OCI-LY7 (cell line): ENCODE measurements at regions of chr9 and their contacts with region 1.

Region 1: DNA sequence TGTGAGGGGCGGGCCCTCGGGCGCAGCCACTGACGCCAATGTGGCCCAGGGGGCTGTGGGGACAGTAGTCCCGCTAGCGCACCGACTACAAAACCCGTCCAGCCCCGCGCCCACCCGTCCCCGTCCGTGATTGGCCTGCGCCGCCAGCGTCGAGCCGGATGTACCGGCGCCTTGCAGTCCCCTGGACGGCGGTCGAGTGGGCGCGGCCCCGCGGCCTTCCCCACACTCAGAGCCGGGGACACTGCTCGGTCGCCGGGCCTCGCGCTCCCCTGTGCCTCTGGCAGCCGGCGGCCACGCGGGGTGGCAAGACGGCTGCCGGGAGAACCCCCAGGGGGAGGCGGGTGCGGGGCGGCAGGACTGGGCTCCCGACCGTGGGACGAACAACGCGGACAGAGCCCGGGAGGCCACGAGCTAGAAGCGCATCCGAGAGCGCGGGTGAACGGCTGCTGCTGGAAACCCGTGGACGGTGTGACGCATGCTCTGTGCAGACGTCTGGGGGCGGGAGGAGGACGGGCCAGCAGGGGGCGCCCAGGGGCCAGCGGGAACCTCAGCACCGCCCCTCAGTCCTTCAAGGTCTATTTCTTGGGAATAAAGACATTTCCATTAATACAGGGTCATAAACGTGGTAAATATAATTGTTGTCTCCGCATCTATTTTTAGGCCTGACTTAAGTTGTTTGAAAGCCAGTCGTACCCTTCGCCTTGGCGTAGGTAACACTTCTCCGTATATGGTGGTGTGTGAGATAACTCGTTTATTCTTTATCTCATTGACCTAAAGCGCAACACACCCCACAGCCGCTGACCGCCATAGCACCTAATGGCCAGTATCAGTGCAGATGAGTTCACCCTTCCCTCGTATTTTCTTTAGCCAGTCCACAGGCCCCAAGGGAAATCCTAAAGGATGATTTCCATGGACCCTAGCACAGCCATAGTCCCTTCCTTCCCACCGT is 629 bp upstream of the BICD2 start:
- DNase-seq: peak; percentile 82
- H3K4me3 ChIP-seq: peak overlapping the region; percentile 87
- H3K27ac ChIP-seq: peak overlapping the region; percentile 86
- H3K4me1 ChIP-seq: peaks cover 48% of the 10 kb centered on the region
- CTCF ChIP-seq: peak; percentile 97

Region 2: GRCh38 chr9:92245005-92245797 is 520.1 kb before region 1 on chr9:
- CTCF ChIA-PET with region 1: no interaction called
- POLR2A ChIA-PET with region 1: no interaction called
- intact Hi-C with region 1: no loop called
- DNase-seq: no peak
- H3K4me3 ChIP-seq: no peak overlapping the region
- H3K27ac ChIP-seq: no peak overlapping the region
- H3K4me1 ChIP-seq: no peaks in the 10 kb centered on the region
- CTCF ChIP-seq: no peak

Region 3: GRCh38 chr9:92669890-92670708 is 95.2 kb before region 1 on chr9 and contains the start of gene IPPK:
- CTCF ChIA-PET with region 1: no interaction called
- POLR2A ChIA-PET with region 1: no interaction called
- intact Hi-C with region 1: loop called (anchors 1 kb)
- DNase-seq: peak; percentile 100
- H3K4me3 ChIP-seq: peak within 1 kb of the TSS; percentile 77
- H3K27ac ChIP-seq: peak within 1 kb of the TSS; percentile 34
- H3K4me1 ChIP-seq: peaks cover 17% of the 10 kb centered on the region
- CTCF ChIP-seq: no peak
- total RNA-seq, gene IPPK: 12.6 and 12.7 TPM in 2 replicates

Region 4: DNA sequence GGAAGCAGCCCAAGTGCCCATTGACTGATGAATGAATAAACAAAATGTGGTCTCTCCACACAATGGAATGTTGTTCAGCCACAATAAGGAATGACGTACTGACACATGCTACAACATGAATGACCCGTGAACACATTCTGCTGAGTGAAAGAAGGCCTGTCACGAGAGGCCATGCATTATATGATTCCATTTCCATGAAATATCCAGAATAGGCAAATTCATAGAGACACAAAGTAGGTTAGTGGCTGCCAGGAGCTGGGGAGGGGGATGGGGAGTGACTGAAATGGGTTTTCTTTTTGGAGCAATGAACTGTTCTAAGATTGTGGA is 42.0 kb before region 1 on chr9:
- CTCF ChIA-PET with region 1: interaction called, 8 read pairs
- POLR2A ChIA-PET with region 1: interaction called, 3 read pairs
- intact Hi-C with region 1: loop called (anchors 1 kb)
- DNase-seq: no peak
- H3K4me3 ChIP-seq: peak overlapping the region; percentile 56
- H3K27ac ChIP-seq: peak overlapping the region; percentile 96
- H3K4me1 ChIP-seq: peaks cover 100% of the 10 kb centered on the region
- CTCF ChIP-seq: no peak

Region 5: GRCh38 chr9:92790542-92791527 is 25.6 kb after region 1 on chr9:
- CTCF ChIA-PET with region 1: no interaction called
- POLR2A ChIA-PET with region 1: interaction called, 3 read pairs
- intact Hi-C with region 1: loop called (anchors 1 kb)
- DNase-seq: peak; percentile 84
- H3K4me3 ChIP-seq: no peak overlapping the region
- H3K27ac ChIP-seq: no peak overlapping the region
- H3K4me1 ChIP-seq: peaks cover 18% of the 10 kb centered on the region
- CTCF ChIP-seq: peak; percentile 97

Region 6: DNA sequence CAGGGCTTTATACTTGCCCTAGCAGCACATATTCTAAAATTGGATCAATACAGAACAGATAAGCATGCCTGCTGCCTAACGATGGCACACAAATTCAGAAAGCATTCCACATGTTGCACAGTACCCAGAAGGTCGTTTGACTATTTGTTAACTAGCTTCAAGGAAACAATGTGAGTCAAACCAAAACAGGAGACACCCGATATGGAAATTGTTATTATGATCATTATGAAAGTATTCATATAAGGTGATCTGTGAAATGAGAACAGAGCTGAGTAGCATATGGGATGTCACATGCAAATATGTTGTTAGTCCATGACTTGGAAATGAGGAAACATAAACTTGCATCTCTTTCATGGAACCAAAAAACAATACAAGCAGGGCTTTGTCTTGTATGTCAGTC is 55.7 kb after region 1 on chr9:
- CTCF ChIA-PET with region 1: no interaction called
- POLR2A ChIA-PET with region 1: no interaction called
- intact Hi-C with region 1: no loop called
- DNase-seq: no peak
- H3K4me3 ChIP-seq: no peak overlapping the region
- H3K27ac ChIP-seq: no peak overlapping the region
- H3K4me1 ChIP-seq: no peaks in the 10 kb centered on the region
- CTCF ChIP-seq: no peak

Region 7: DNA sequence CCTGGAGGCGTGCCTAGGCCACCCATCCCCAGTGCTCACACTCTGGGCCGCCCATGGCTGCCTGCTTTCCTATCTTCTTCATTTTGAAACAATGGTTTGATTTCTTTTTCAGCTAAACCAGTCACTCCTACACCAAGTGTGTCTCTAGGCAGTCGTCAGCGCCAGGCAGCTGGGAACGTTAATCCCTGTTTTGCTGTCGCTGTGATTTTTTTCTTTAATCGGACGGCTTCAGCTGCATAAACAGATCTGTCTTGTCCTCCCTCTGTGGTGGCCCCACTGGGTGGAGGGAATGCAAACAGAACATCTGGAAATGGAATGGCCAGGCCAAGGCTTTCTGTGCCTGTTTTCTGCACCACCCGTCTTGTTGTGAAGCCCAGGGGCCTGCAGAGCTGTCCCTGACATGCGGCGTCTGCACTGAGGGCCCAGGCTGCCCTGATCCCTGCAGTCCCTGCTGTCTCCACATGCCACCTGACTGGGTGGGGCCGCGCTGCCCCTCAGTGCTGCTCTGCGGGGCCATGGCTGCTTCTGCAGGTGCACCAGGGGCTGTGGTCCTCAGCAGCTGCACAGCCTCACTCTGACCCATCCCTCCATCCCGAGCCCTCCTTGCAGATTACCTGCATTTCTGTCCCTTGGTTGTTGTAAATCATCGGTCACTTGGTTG is 470.2 kb after region 1 on chr9:
- CTCF ChIA-PET with region 1: no interaction called
- POLR2A ChIA-PET with region 1: no interaction called
- intact Hi-C with region 1: no loop called
- DNase-seq: no peak
- H3K4me3 ChIP-seq: no peak overlapping the region
- H3K27ac ChIP-seq: no peak overlapping the region
- H3K4me1 ChIP-seq: peaks cover 9% of the 10 kb centered on the region
- CTCF ChIP-seq: no peak